Body of pancreas (tissue), 4 donors: ENCODE measurements at regions of chr2 and their contacts with region 1.

Region 1: DNA sequence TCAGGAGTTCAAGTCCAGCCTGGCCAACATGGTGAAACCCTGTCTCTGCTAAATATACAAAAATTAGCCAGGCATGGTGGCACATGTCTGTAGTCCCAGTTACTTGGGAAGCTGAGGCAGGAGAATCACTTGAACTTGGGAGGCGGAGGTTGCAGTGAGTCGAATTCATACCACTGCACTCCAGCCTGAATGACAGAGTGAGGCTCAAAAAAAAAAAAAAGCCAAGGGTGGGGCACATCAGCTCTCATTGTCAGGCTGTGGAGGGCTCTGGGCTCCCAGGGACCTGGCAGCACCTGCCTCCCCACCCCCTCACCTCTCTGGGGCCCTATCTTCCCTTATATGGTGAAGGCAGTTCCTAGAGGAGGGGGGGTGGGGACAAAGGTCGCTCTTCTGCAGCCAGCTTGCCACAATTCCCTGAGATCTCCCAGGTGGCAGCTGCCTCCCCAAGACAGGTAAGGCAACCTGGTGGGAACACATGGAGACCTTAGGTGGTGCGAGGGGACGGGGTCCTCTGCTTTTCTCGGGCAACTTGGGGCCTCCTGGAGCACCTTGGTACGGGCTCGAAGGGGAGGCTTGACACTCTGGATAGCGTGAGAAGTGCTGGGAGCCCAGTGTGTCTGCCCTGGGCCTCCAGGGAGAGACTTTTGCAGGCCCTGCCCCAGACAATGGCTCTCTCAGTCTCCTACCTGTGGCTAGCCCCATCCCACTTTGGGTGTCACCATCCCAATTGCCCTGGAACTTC is at the start of gene VIL1:
- DNase-seq: peak; percentile 83 to 92 (median 87)
- ATAC-seq: peak; percentile 94
- H3K4me3 ChIP-seq: no peak within 1 kb of the TSS
- H3K27ac ChIP-seq: peak within 1 kb of the TSS in 3 of 4 donors; percentile 53 to 79 (median 64)
- H3K4me1 ChIP-seq: peaks cover 39% of the 10 kb centered on the region
- H3K27me3 ChIP-seq: no peaks in the 10 kb centered on the region
- CTCF ChIP-seq: no peak
- POLR2A ChIP-seq: peak in 2 of 3 donors; percentile 50 to 51
- total RNA-seq, gene VIL1: 15.3 to 15.8 TPM

Region 2: GRCh38 chr2:218466016-218466521 is 47.2 kb after region 1 on chr2:
- intact Hi-C with region 1: loop called (anchors 10 kb)
- DNase-seq: no peak
- ATAC-seq: peak; percentile 56
- H3K4me3 ChIP-seq: no peak overlapping the region
- H3K27ac ChIP-seq: no peak overlapping the region
- H3K4me1 ChIP-seq: no peaks in the 10 kb centered on the region
- H3K27me3 ChIP-seq: no peaks in the 10 kb centered on the region
- CTCF ChIP-seq: peak; percentile 7 to 62 (median 51)
- POLR2A ChIP-seq: no peak

Region 3: GRCh38 chr2:218648088-218648786 is 229.3 kb after region 1 on chr2:
- intact Hi-C with region 1: loop called (anchors 10 kb)
- DNase-seq: peak; percentile 41 to 59 (median 53)
- ATAC-seq: peak; percentile 55
- H3K4me3 ChIP-seq: no peak overlapping the region
- H3K27ac ChIP-seq: no peak overlapping the region
- H3K4me1 ChIP-seq: peaks cover 16% of the 10 kb centered on the region
- H3K27me3 ChIP-seq: no peaks in the 10 kb centered on the region
- CTCF ChIP-seq: peak in 6 of 7 experiments; percentile 53 to 70 (median 64)
- POLR2A ChIP-seq: no peak